CD14-positive monocyte (primary cell): ENCODE measurements at regions of chr11 and their contacts with region 1.

Region 1: DNA sequence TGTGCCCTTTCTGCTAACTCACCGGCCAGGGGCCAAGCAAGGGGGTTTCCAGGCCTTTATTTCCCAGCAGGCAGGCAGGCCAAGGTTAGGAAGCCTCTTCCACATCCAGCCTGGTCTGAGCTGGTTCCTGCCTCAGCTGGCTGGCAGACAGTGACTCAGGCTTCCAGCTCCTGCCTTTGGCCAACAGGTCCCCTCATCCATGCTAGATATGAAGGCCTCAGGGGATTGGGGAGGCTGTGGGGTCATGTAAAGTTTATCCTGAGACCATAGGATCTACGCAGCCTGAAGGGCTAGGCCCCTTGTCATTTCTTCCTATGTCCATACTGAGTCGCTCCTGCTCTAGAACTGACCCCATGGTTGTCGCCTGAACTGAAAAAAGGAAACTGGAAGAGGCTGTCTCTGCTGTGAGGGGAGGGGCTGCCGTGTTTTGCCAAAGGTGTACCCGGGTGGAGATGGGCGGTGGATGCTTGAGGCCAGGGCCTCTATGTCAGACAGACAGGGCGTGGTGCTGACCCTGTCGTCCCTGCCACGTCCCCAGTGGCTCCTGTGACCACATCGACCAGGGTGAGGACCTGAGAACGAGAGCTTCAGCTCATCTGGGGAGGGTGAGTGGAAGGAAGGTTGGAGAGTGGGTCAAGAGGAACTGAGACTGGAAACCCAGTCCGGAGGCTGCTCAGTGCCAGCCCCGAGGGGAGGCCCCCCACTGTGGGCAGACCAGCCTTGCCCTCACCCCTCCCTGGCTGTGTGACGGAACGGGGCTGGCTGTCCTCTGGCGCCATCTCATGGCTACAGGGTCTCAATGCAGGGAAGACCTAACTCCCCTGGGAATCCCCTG is 17.0 kb downstream of the P2RY6 start:
- DNase-seq: peak; percentile 91 to 97 (median 95)
- H3K4me3 ChIP-seq: peak overlapping the region in 2 of 3 experiments; percentile 7 to 60
- H3K4me3 Mint-ChIP-seq: peak overlapping the region; percentile 62 to 80
- H3K27ac ChIP-seq: peak overlapping the region; percentile 94
- H3K27ac Mint-ChIP-seq: peak overlapping the region; percentile 96 to 99 (median 98)
- H3K4me1 ChIP-seq: peaks cover 38 to 48% of the 10 kb centered on the region in 2 donors
- H3K4me1 Mint-ChIP-seq: peaks cover 61% of the 10 kb centered on the region
- H3K27me3 ChIP-seq: no peaks in the 10 kb centered on the region
- H3K27me3 Mint-ChIP-seq: peaks cover 5 to 20% (median 8%) of the 10 kb centered on the region in 3 donors
- CTCF ChIP-seq: peak; percentile 99

Region 2: DNA sequence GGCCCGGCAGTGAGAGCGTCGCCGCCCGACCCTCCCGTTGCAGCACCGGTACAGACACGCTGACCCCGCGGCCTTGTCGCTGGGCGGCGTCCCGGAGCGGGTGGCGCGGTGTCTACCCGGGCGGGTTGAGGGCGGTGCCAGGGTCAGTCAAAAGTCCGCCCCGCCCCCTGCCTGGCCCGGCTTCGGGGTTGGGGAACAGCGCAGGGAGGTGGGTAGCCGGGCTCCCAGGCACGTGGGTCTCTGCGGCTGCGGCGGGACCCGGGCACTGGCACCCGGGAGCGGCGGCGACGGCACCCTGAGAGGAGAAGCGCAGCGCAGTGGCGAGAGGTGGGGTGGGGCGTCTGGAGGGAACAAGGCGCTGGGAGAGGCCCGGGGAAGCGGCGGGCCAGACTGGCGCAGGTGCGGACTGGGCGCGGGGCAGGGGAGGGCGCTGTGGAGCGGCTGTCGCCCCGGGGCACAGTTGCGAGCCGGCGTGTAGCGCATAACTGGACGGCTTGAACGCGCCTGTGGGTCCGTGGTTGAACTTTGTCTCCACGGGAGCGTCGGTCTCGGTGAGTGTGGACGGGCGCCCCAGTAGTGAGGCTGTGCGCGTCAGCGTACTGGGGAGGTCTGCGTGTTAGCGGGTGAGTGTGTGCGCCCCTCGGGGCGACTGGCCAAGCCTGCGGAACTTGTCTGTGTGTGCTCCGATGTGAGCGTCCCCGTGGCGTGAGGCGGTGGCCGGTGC is 70.8 kb before region 1 on chr11 and contains the start of gene P2RY2:
- intact Hi-C with region 1: loop called in 1 of 2 experiments (anchors 5 kb)
- DNase-seq: peak; percentile 77 to 88 (median 80)
- H3K4me3 ChIP-seq: peak within 1 kb of the TSS; percentile 66 to 85 (median 85)
- H3K4me3 Mint-ChIP-seq: peak within 1 kb of the TSS; percentile 94 to 98
- H3K27ac ChIP-seq: peak within 1 kb of the TSS; percentile 79 to 82
- H3K27ac Mint-ChIP-seq: peak within 1 kb of the TSS; percentile 93 to 97 (median 96)
- H3K4me1 ChIP-seq: peaks cover 91 to 94% of the 10 kb centered on the region in 2 donors
- H3K4me1 Mint-ChIP-seq: peaks cover 90% of the 10 kb centered on the region
- H3K27me3 ChIP-seq: no peaks in the 10 kb centered on the region
- H3K27me3 Mint-ChIP-seq: peaks cover 0 to 2% (median 0%) of the 10 kb centered on the region in 3 donors
- CTCF ChIP-seq: peak; percentile 79
- polyA plus RNA-seq, gene P2RY2: 2.8 to 24.1 (median 12.7) TPM

Region 3: GRCh38 chr11:73252577-73253195 is 36.4 kb before region 1 on chr11:
- intact Hi-C with region 1: loop called (anchors 5 kb)
- DNase-seq: no peak
- H3K4me3 ChIP-seq: no peak overlapping the region
- H3K4me3 Mint-ChIP-seq: no peak overlapping the region
- H3K27ac ChIP-seq: no peak overlapping the region
- H3K27ac Mint-ChIP-seq: peak overlapping the region in 1 of 7 donors; percentile 21
- H3K4me1 ChIP-seq: no peaks in the 10 kb centered on the region
- H3K4me1 Mint-ChIP-seq: no peaks in the 10 kb centered on the region
- H3K27me3 ChIP-seq: no peaks in the 10 kb centered on the region
- H3K27me3 Mint-ChIP-seq: peaks cover 0 to 2% (median 0%) of the 10 kb centered on the region in 3 donors
- CTCF ChIP-seq: peak; percentile 11

Region 4: DNA sequence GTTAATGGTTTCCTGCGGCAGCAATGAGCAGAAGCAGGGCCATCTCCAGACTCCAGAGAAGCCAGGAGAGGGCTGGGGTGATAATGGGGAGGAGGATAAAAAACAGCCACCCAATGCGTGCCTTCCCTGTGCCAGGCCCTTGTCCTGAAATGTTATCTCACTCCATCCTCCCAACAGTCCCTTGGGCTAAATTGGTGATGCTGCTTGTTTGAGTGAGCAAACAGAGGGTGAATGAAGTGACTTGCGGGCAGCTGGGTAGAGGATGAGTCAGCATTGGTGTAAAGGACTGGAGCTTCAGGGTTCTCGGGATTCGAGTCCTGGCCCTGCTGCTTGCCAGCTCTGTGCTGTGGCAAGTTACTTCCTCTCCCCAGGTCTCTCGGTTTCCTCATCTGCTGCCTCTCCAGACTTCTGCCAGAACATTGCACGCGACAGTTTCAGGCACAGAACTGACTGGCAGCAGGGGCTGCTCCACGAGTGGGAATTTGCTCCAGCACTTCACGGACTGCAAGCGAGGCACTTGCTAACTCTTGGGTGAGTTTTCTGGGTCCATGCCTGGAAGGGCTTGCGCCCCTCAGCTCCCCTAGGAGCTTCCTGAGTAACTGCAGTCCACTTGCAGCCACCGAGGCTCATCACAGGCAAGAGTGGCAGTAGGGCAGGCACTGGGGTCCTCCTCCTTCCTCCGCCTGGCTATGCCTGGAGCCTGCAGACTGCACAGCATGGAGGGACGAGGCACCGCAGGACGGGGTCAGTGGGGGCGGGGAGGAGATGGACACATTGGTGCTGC is 17.0 kb before region 1 on chr11 and contains the start of gene P2RY6:
- intact Hi-C with region 1: loop called in 1 of 2 experiments (anchors 2 kb)
- DNase-seq: peak; percentile 90 to 97 (median 93)
- H3K4me3 ChIP-seq: peak within 1 kb of the TSS in 1 of 3 experiments; percentile 21
- H3K4me3 Mint-ChIP-seq: peak within 1 kb of the TSS in 1 of 2 donors; percentile 48
- H3K27ac ChIP-seq: peak within 1 kb of the TSS; percentile 36 to 69
- H3K27ac Mint-ChIP-seq: peak within 1 kb of the TSS; percentile 64 to 85 (median 79)
- H3K4me1 ChIP-seq: peaks cover 68 to 74% of the 10 kb centered on the region in 2 donors
- H3K4me1 Mint-ChIP-seq: peaks cover 73% of the 10 kb centered on the region
- H3K27me3 ChIP-seq: peaks cover 0 to under 1% of the 10 kb centered on the region in 2 donors
- H3K27me3 Mint-ChIP-seq: peaks cover 6 to 10% (median 7%) of the 10 kb centered on the region in 3 donors
- CTCF ChIP-seq: no peak
- polyA plus RNA-seq, gene P2RY6: 1.7 to 5.1 (median 1.8) TPM